ENCODE measurements at regions of chr3 and their contacts with region 1.

Region 1: GRCh38 chr3:146125951-146126350 is 35.0 kb downstream of the PLOD2 start:
- DNase-seq: no peak
- ATAC-seq: peak in 3 of 4 donors; percentile 81 to 90 (median 87)
- H3K4me3 ChIP-seq: no peak overlapping the region
- H3K27ac ChIP-seq: peak overlapping the region in 7 of 12 donors; percentile 10 to 63 (median 38)
- H3K4me1 ChIP-seq: peaks cover 0 to 38% (median 6%) of the 10 kb centered on the region in 12 donors
- H3K27me3 ChIP-seq: no peaks in the 10 kb centered on the region
- CTCF ChIP-seq: no peak
- POLR2A ChIP-seq: no peak

Region 2: DNA sequence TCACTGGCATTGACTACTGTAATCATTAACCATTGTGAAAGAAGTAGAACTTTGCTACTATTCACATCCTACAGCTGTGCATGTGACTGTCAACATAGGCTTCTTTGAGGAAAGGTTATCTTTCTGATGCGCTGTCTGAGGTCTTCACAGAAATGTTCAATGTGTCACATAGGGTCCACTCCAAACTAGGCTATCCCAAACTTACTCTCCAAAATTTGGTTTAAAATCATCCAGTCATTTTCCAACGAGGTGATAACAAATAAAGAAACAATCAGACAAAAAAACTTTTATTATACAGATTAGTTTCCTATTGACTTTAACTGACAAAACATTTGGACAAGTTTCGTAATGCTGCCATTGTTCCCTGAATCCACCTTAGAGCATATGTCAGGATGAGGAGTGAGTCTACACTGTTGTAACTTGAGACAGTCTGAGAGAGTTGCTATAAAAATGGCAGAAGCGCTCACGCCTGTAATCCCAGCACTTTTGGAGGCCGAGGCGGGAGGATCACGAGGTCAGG is 476.5 kb before region 1 on chr3:
- intact Hi-C with region 1: no loop called
- DNase-seq: no peak
- ATAC-seq: no peak
- H3K4me3 ChIP-seq: no peak overlapping the region
- H3K27ac ChIP-seq: no peak overlapping the region
- H3K4me1 ChIP-seq: no peaks in the 10 kb centered on the region
- H3K27me3 ChIP-seq: no peaks in the 10 kb centered on the region
- CTCF ChIP-seq: no peak
- POLR2A ChIP-seq: no peak

Region 3: GRCh38 chr3:146106986-146107385 is 19.0 kb before region 1 on chr3:
- intact Hi-C with region 1: loop called in 1 of 10 experiments (anchors 1 kb)
- DNase-seq: no peak
- ATAC-seq: no peak
- H3K4me3 ChIP-seq: no peak overlapping the region
- H3K27ac ChIP-seq: no peak overlapping the region
- H3K4me1 ChIP-seq: peaks cover 0 to 2% (median 0%) of the 10 kb centered on the region in 12 donors
- H3K27me3 ChIP-seq: no peaks in the 10 kb centered on the region
- CTCF ChIP-seq: no peak
- POLR2A ChIP-seq: no peak

Measured in heart left ventricle (tissue), 16 donors.